AG04449 (cell line): ENCODE measurements at regions of chr10 and their contacts with region 1.

Region 1: DNA sequence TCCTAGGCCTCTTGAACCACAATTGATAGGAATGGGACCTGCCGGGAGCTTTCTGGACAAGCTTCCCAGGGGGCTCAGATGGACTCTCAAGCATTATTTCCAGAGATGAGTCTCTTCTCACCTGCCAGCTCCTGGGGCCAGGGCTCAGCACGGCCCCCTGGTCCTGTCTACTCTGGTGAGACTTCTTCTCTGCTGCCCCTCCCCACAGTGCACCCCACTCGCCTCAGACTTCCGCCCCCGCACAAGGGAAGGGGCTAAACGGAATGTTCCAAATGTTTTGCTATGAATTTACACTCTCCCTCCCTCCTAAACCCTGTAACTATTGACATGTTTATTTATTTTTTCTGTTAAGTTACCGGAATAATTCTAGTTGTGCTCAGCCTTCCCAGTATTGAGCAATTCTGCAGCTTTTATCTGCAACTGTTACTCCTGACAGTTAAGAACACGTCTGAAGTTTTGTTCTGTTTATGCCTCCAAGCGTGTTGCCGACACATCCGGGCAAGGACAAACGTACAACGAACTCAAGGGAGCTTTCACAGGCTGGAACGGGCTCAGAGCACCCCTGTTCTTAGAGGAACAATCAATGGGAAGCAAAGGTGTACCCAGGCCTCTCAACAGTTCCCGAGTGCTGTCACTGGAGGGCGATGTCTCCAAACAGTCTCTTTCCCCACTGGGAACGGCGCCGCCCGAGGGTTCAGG is 55.2 kb downstream of the FHIP2A start:
- DNase-seq: no peak
- H3K4me3 ChIP-seq: no peak overlapping the region
- CTCF ChIP-seq: peak; percentile 88

Region 2: DNA sequence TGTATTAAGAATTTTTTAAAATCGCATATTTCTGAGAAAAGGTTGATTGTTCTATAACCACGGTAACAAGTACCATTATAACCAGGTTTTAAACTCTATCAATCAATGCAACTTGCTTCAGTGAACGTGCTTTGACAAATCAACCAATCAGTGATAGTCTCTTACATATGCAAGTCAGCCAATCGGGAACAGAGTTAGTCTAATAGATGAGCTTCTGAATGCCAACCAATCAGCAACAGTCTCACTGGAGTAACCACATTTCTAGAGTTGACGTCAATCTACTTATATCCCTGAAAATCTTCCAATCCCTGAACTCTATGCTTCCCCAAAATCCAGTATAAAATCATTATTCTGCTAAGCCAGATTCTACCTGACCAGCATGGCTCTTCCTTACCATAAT is 16.5 kb after region 1 on chr10:
- CTCF ChIA-PET with region 1: interaction called, 14 read pairs
- POLR2A ChIA-PET with region 1: no interaction called
- DNase-seq: no peak
- H3K4me3 ChIP-seq: no peak overlapping the region
- CTCF ChIP-seq: no peak

Region 3: DNA sequence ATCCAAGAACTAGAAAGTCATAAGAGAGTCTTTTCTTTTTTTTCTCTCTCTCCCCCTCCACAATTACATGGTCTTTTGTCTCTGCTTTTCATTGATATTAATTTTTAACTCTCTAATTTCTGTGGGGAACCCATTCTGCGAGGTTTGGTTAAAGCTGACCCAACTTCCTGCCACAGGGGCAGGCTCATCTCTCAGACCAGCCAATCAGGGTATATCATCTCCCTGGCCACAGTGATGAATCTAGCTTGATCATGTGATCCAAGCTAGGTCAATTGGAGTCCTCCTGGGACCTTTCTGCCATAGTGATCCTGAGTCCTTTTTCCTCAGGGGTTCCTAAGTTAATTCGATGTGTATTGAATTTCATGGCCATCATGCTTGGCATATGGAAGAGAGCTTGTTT is 23.2 kb after region 1 on chr10:
- CTCF ChIA-PET with region 1: interaction called, 18 read pairs
- POLR2A ChIA-PET with region 1: no interaction called
- DNase-seq: no peak
- H3K4me3 ChIP-seq: no peak overlapping the region
- CTCF ChIP-seq: no peak

Region 4: GRCh38 chr10:114937962-114938855 is 61.5 kb after region 1 on chr10 and contains the start of gene TRUB1:
- CTCF ChIA-PET with region 1: interaction called, 18 read pairs
- POLR2A ChIA-PET with region 1: no interaction called
- DNase-seq: peak; percentile 79
- H3K4me3 ChIP-seq: peak within 1 kb of the TSS; percentile 97
- CTCF ChIP-seq: no peak

Region 5: GRCh38 chr10:114956466-114956865 is 79.7 kb after region 1 on chr10:
- CTCF ChIA-PET with region 1: interaction called, 10 read pairs
- POLR2A ChIA-PET with region 1: no interaction called
- DNase-seq: no peak
- H3K4me3 ChIP-seq: no peak overlapping the region
- CTCF ChIP-seq: no peak

Region 6: GRCh38 chr10:115030483-115031198 is 153.9 kb after region 1 on chr10:
- CTCF ChIA-PET with region 1: no interaction called
- POLR2A ChIA-PET with region 1: no interaction called
- DNase-seq: no peak
- H3K4me3 ChIP-seq: no peak overlapping the region
- CTCF ChIP-seq: no peak

Region 7: GRCh38 chr10:115129752-115130151 is 253.0 kb after region 1 on chr10:
- CTCF ChIA-PET with region 1: interaction called, 107 read pairs
- POLR2A ChIA-PET with region 1: no interaction called
- DNase-seq: no peak
- H3K4me3 ChIP-seq: no peak overlapping the region
- CTCF ChIP-seq: no peak